PC-9 (cell line): ENCODE measurements at regions of chr4 and their contacts with region 1.

Region 1: DNA sequence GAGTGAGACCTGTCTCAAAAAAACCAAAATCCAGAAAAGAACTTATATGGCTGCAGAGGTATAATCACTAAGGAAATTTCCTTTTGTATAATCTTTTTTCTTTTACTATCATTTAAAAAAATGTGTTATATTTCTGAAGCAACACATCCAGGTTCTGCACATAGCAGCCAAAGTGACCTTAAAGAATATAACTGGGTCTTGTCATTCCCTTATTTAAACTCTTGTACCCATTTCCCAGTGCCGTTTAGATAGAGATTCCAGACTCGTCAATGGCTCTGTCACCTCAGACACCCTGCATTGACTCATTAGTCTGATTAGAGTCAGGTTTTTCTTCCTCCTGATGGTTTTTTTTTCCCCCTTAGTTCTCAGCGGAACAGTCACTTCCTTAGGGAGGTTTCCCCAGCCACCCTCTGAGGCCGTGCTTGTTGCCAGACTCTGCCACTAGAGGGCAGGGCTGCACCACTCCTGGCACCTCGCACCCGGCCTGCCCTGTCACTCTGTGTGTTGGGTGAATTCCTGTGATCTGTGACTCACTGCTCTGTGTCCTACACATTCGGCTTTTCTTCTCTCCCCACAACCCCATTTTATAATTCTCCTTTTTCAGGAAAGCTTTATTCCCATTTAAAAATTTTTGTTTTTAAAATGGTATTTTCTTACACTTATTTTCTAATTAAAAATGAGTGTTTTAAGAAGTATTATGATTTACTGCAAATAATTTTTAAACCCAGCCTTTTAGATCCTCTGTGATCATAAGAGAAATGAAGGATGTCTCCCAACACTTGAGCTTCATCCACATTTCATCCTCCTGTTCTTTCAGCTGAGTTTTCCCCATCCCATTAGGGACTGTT is 32.1 kb downstream of the HTT start:
- DNase-seq: peak; percentile 83 to 92
- H3K4me3 ChIP-seq: no peak overlapping the region
- H3K27ac ChIP-seq: no peak overlapping the region
- H3K4me1 ChIP-seq: peaks cover 6% of the 10 kb centered on the region; the same call in 1 of the 2 replicates
- H3K27me3 ChIP-seq: no peaks in the 10 kb centered on the region
- CTCF ChIP-seq: peak; percentile 86

Region 2: DNA sequence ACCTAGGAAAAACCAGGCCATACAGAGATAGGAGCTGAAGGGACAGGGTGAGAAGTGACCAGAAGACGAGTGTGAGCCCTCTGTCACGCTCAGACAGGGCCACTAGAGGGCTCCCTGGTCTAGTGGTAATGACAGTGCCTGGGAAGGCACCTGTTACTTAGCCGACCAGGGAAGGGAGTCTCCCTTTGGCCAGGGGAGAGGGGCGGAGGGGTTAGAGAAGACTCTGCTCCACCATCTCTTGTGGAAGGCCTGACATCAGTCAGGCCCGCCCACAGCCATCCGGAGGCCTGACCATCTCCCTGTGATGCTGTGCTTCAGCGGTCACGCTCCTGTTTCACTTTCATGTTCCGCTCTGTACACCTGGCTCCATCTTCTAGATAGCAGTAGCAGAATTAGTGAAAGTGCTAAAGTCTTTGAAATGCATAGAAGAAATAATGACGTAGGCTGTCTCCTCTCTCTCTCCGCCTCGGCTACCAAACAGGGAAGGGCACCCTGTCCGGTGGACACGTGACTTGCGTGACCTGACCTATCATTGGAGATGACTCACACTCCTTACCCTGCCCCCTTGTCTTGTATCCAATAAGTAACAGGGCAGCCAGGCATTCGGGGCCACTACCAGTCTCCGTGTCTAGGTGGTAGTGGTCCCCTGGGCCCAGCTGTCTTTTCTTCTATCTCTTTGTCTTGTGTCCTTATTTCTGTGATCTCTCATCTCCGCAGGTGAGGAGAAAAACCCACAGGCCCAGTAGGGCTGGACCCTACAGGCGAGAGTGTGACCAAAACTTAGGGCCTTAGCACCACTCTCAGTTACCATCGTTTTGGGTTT is 58.9 kb before region 1 on chr4:
- CTCF ChIA-PET with region 1: no interaction called
- POLR2A ChIA-PET with region 1: no interaction called
- intact Hi-C with region 1: loop called (anchors 1 kb)
- DNase-seq: peak in 1 of 2 experiments; percentile 66
- H3K4me3 ChIP-seq: peak overlapping the region; percentile 39; the same call in 1 of the 2 replicates
- H3K27ac ChIP-seq: no peak overlapping the region
- H3K4me1 ChIP-seq: 0 out of 2 replicates have a peak, but pooled peaks cover under 1% of the 10 kb centered on the region
- H3K27me3 ChIP-seq: no peaks in the 10 kb centered on the region
- CTCF ChIP-seq: peak; percentile 71